A549 (cell line): ENCODE measurements at regions of chr19 and their contacts with region 1.

Region 1: GRCh38 chr19:14496028-14496833 is at the start of gene GIPC1:
- DNase-seq: peak; percentile 96 to 98
- ATAC-seq: peak; percentile 93
- H3K4me3 ChIP-seq: peak within 1 kb of the TSS; percentile 68
- H3K27ac ChIP-seq: peak within 1 kb of the TSS; percentile 89 to 99
- H3K4me1 ChIP-seq: peaks cover 28% of the 10 kb centered on the region
- CTCF ChIP-seq: no peak
- EP300 ChIP-seq: no peak
- POLR2A ChIP-seq: no peak
- RAD21 ChIP-seq: no peak
- polyA plus RNA-seq, gene GIPC1: 41.4 and 52.9 TPM in 2 replicates

Region 2: DNA sequence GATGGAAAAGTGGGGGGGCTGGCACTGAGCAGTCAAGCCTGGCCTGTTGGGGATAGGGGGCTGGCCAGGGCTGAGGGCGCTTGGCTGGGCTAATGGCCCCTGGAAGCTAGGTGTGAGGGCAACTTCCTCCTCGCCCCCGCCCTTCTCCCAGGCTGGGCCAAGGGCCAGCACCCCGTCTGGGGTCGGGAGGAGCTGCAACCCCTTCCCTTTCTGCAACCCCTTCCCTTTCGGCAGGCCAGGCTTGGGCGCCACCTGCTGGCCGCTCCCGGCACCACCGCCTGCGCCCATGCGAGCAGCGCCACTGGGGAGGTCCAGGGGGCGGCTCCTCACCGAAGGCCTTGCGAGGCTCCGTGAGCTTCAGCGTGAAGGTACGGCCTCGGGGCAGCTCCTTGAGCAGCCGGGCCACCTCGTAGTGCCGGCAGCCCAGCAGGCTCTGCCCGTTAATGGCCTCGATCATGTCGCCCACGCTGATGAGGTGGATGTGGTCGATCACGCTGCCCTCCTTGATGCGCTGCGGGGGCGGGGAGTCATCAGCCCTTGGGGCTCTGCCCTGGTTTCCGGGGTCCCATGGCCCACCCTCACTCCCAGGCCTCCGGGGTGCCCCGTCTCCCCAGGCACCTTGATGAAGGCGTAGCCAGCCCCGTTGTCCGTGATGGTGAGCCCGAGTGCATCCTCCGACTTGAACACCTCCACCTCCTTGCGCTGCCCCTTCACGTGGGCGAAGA is 16.1 kb before region 1 on chr19:
- CTCF ChIA-PET with region 1: interaction called, 22 read pairs
- POLR2A ChIA-PET with region 1: no interaction called
- DNase-seq: peak; percentile 60 to 63
- ATAC-seq: peak; percentile 42 to 75
- H3K4me3 ChIP-seq: no peak overlapping the region
- H3K27ac ChIP-seq: peak overlapping the region in 1 of 2 experiments; percentile 53; a peak in 2 of 6 replicates
- H3K4me1 ChIP-seq: peaks cover 30% of the 10 kb centered on the region
- CTCF ChIP-seq: peak; percentile 65
- EP300 ChIP-seq: no peak
- POLR2A ChIP-seq: no peak
- RAD21 ChIP-seq: peak; percentile 46 to 49